ENCODE measurements at regions of chr9 and their contacts with region 1.

Region 1: DNA sequence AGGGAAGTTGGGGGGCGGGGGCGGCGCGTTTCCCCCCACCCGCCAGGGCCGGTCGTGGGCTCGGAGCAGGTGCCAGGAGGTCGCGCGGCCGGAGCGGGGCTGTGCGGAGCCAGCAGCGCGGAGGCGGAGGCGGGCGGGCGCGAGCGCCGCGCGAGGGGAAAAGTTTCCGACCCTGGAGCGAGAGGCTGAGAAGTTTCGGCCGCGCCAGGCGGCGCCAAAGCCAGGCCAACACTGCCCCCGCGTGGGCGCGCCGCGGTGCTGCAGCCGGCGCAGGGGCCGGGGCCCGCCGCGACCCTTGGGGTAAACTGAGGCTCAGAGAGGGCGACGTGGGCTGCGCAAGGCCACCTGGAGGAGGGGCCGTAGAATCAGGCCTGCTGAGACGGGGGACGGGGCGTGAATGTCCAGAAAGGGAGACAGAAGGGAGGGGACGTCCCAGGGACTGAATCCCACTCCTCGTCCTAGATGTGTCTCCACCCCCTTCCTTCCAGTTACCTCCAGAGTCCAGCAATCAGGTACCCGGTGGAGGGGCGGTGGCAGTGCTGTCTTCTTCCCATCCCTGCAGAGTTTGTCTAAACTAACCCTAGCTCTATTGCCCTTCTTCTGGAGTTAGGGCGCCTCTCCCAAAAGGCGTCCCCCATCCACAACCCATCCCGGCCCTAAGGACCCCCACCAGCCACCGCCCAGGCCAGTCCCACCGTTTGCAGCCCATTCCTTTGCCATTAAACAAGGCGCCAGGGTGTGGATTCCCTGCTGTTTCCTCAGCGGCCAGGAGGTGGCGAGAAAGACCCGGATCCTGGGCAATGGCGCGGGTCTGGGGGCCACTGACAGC is 10.2 kb downstream of the C9orf50 start:
- DNase-seq: peak; percentile 79 to 83 (median 80)
- ATAC-seq: peak; percentile 37 to 71 (median 68)
- H3K4me3 ChIP-seq: peak overlapping the region; percentile 49 to 59 (median 52)
- H3K27ac ChIP-seq: peak overlapping the region; percentile 69 to 94 (median 83)
- H3K4me1 ChIP-seq: peaks cover 0 to 29% (median 10%) of the 10 kb centered on the region in 4 donors
- H3K27me3 ChIP-seq: no peaks in the 10 kb centered on the region
- CTCF ChIP-seq: peak; percentile 87 to 100 (median 92)
- POLR2A ChIP-seq: peak; percentile 30

Region 2: GRCh38 chr9:129154866-129155477 is 455.7 kb before region 1 on chr9:
- intact Hi-C with region 1: loop called in 1 of 2 experiments (anchors 10 kb)
- DNase-seq: no peak
- ATAC-seq: peak in 2 of 4 donors; percentile 8 to 15
- H3K4me3 ChIP-seq: no peak overlapping the region
- H3K27ac ChIP-seq: no peak overlapping the region
- H3K4me1 ChIP-seq: no peaks in the 10 kb centered on the region
- H3K27me3 ChIP-seq: no peaks in the 10 kb centered on the region
- CTCF ChIP-seq: no peak
- POLR2A ChIP-seq: no peak

Region 3: GRCh38 chr9:129500161-129500862 is 110.4 kb before region 1 on chr9:
- intact Hi-C with region 1: loop called in 1 of 2 experiments (anchors 10 kb)
- DNase-seq: no peak
- ATAC-seq: no peak
- H3K4me3 ChIP-seq: no peak overlapping the region
- H3K27ac ChIP-seq: no peak overlapping the region
- H3K4me1 ChIP-seq: peaks cover 0 to 15% (median 4%) of the 10 kb centered on the region in 4 donors
- H3K27me3 ChIP-seq: no peaks in the 10 kb centered on the region
- CTCF ChIP-seq: no peak
- POLR2A ChIP-seq: no peak

Measured in right lobe of liver (tissue), 6 donors.